ENCODE measurements at regions of chr16 and their contacts with region 1.

Region 1: DNA sequence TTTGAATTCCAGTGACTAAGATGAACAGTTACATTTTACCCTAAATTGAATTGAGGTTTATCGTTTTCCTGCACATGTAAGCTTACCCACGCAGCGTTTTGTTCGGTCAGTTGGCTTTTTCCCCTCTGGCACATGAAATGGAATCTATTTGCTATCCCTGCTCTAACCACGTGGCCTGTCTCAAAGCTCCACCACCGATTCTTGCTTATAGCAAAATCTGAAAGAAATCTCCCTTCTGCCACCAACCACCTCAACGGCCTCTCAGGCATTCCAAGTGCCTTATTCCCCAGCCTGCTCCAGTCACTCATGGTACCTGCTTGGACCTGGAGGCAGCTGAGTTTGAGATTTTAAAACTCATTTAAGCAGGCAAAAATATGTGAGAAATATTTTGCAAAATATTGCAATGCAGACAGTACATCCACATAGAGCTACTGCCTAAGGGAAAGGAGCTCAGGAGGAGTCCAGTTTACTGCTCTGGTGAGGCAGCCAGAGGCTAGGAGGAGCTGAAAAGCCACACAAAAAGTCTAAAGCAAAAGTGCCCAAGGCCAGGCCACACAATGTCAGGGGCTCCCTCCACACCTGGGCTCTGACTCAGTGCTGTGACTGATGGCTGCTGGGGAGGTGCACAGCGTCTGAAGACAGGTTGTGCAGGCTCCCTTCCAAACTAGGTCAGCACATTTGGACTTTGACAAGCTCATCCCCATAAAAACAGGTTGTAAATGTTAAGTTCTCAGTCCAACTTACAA is 26.4 kb downstream of the ARHGAP17 start:
- DNase-seq: no peak
- ATAC-seq: peak; percentile 32
- H3K4me3 ChIP-seq: no peak overlapping the region
- H3K27ac ChIP-seq: no peak overlapping the region
- H3K4me1 ChIP-seq: peaks cover 51% of the 10 kb centered on the region
- H3K27me3 ChIP-seq: no peaks in the 10 kb centered on the region
- CTCF ChIP-seq: no peak
- EP300 ChIP-seq: no peak
- POLR2A ChIP-seq: no peak
- RAD21 ChIP-seq: no peak

Region 2: GRCh38 chr16:24939234-24939633 is 49.5 kb before region 1 on chr16:
- CTCF ChIA-PET with region 1: no interaction called
- POLR2A ChIA-PET with region 1: no interaction called
- RAD21 ChIA-PET with region 1: no interaction called
- SMC1A ChIA-PET with region 1: no interaction called
- in situ Hi-C with region 1: no loop called
- intact Hi-C with region 1: no loop called
- DNase-seq: no peak
- ATAC-seq: no peak
- H3K4me3 ChIP-seq: no peak overlapping the region
- H3K27ac ChIP-seq: no peak overlapping the region
- H3K4me1 ChIP-seq: no peaks in the 10 kb centered on the region
- H3K27me3 ChIP-seq: no peaks in the 10 kb centered on the region
- CTCF ChIP-seq: no peak
- EP300 ChIP-seq: no peak
- POLR2A ChIP-seq: no peak
- RAD21 ChIP-seq: no peak

Region 3: DNA sequence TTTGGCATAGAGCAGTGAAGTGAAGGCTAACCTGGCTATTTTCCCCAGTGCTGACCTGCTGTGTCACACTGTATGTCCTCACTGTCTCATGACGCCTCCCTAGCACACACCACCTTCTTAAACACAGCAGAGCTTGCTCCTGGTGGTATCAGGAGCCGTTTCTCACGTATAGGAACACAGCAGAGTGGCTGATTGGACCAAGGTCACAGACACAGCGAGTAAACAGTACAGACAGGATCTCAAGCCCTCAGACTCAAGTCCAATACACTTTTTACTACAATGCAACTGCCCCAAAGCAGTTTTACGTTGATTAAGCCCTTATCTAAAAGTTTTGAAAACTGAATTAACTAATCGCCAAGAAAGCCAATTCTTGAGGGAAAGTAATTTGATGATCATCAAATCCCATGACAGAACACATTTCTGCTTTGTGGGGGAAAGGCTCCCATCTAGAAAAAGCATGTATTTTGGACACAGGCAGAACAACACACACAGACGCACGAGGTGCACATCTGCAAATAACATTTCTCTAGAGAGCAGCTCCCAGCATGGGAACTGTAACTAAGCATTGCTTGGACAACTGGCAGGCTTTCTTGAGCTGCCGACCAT is 11.2 kb after region 1 on chr16:
- CTCF ChIA-PET with region 1: interaction called, 4 read pairs
- POLR2A ChIA-PET with region 1: interaction called, 9 read pairs
- RAD21 ChIA-PET with region 1: interaction called, 4 read pairs
- SMC1A ChIA-PET with region 1: interaction called, 42 read pairs
- in situ Hi-C with region 1: no loop called
- intact Hi-C with region 1: no loop called
- DNase-seq: no peak
- ATAC-seq: peak; percentile 25; the same call in 2 of the 3 replicates
- H3K4me3 ChIP-seq: no peak overlapping the region
- H3K27ac ChIP-seq: peak overlapping the region; percentile 28; the same call in 1 of the 2 replicates
- H3K4me1 ChIP-seq: peaks cover 47% of the 10 kb centered on the region
- H3K27me3 ChIP-seq: no peaks in the 10 kb centered on the region
- CTCF ChIP-seq: no peak
- EP300 ChIP-seq: no peak
- POLR2A ChIP-seq: no peak
- RAD21 ChIP-seq: no peak

Measured in GM12878 (cell line).